Dendritic cell treated with granulocyte-macrophage colony-stimulating factor and Interleukin-4, amounts not matched to agents 40 ng/mL and 50 ng/mL, for 4 days (primary cell): ENCODE measurements at regions of chr12 and their contacts with region 1.

Region 1: GRCh38 chr12:7583571-7583970 is 80.0 kb upstream of the CD163 start:
- H3K4me3 Mint-ChIP-seq: no peak overlapping the region
- H3K27ac Mint-ChIP-seq: no peak overlapping the region
- H3K4me1 Mint-ChIP-seq: peaks cover 33% of the 10 kb centered on the region
- H3K27me3 Mint-ChIP-seq: peaks cover 2% of the 10 kb centered on the region

Region 2: GRCh38 chr12:7542813-7543498 is 40.6 kb before region 1 on chr12:
- intact Hi-C with region 1: loop called (anchors 5 kb)
- H3K4me3 Mint-ChIP-seq: peak overlapping the region; percentile 21
- H3K27ac Mint-ChIP-seq: peak overlapping the region; percentile 93
- H3K4me1 Mint-ChIP-seq: peaks cover 52% of the 10 kb centered on the region
- H3K27me3 Mint-ChIP-seq: no peaks in the 10 kb centered on the region

Region 3: DNA sequence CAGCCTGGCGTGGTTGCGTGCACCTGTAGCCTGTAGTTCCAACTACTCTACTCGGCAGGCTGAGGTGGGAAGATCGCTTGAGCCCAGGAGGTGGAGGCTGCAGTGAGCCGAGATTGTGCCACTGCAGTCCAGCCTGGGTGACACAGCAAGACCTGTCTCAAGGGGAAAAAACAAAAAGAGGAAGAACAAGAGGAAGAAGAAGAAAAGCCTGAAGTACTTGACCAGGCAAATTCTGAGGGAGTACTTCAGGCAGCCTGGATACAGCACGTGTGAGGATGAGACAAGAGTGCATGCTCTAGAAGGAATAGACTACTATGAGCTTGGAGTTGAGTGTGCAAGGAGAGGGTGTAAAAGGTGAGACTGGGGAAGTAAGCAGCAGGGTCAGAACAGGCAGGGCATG is 110.2 kb after region 1 on chr12:
- intact Hi-C with region 1: no loop called
- H3K4me3 Mint-ChIP-seq: no peak overlapping the region
- H3K27ac Mint-ChIP-seq: no peak overlapping the region
- H3K4me1 Mint-ChIP-seq: peaks cover 22% of the 10 kb centered on the region
- H3K27me3 Mint-ChIP-seq: peaks cover 14% of the 10 kb centered on the region

Region 4: GRCh38 chr12:8813572-8814357 is 1230.2 kb after region 1 on chr12:
- intact Hi-C with region 1: no loop called
- H3K4me3 Mint-ChIP-seq: no peak overlapping the region
- H3K27ac Mint-ChIP-seq: no peak overlapping the region
- H3K4me1 Mint-ChIP-seq: peaks cover 19% of the 10 kb centered on the region
- H3K27me3 Mint-ChIP-seq: no peaks in the 10 kb centered on the region